HepG2 (cell line): ENCODE measurements at regions of chr17 and their contacts with region 1.

Region 1: DNA sequence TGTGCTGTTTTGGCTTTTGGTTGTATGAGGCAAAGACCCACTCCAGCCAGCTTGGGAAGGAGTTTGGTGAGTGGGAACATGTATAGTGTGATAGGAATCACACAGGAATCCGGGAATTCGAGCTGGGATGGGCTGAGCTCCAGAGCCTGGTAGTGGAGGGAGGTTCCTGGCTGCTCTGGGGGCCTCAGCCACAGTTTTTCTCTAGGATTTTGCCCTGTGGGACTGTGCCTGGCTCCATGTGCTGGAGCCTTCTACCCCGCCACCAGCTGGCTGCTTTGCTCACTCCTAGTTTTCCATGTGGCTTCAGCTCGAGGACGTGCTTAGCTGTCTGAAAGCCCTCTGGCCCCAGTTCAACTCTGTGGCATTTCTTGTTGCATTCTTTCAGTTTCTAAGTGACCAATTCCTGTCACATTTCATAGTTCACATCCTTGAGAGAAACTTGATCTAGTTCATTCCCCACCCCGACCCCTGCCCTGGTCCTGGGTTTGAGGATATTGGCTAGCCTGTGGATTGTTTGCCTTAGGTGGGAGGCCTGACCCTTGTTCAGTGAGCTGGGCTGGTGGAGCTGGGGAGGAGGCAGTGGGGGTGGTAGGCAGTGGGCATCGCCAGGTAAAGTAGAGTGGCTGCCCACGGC is 5.0 kb downstream of the SEC14L1 start:
- DNase-seq: peak; percentile 70
- ATAC-seq: peak; percentile 75
- H3K4me3 ChIP-seq: 0 out of 6 replicates have a peak overlapping the region, but pooled peaks of 1 of the 3 experiments have one; percentile 13
- H3K27ac ChIP-seq: peak overlapping the region; percentile 68
- H3K4me1 ChIP-seq: peaks cover 85% of the 10 kb centered on the region
- H3K27me3 ChIP-seq: no peaks in the 10 kb centered on the region; a peak in 1 of 5 replicates
- CTCF ChIP-seq: peak; percentile 54
- EP300 ChIP-seq: no peak; a peak in 1 of 4 replicates
- POLR2A ChIP-seq: no peak
- RAD21 ChIP-seq: 0 out of 2 replicates have a peak, but pooled peaks have one; percentile 46

Region 2: GRCh38 chr17:76893623-76894334 is 251.9 kb before region 1 on chr17:
- CTCF ChIA-PET with region 1: no interaction called
- POLR2A ChIA-PET with region 1: no interaction called
- in situ Hi-C with region 1: no loop called
- intact Hi-C with region 1: no loop called
- DNase-seq: no peak
- ATAC-seq: no peak
- H3K4me3 ChIP-seq: no peak overlapping the region
- H3K27ac ChIP-seq: no peak overlapping the region
- H3K4me1 ChIP-seq: no peaks in the 10 kb centered on the region
- H3K27me3 ChIP-seq: peaks cover 3 to 56% of the 10 kb centered on the region in 2 experiments; a peak in 4 of 5 replicates
- CTCF ChIP-seq: no peak
- EP300 ChIP-seq: no peak
- POLR2A ChIP-seq: no peak
- RAD21 ChIP-seq: no peak

Region 3: GRCh38 chr17:77096570-77097214 is 49.0 kb before region 1 on chr17:
- CTCF ChIA-PET with region 1: no interaction called
- POLR2A ChIA-PET with region 1: interaction called, 15 read pairs
- in situ Hi-C with region 1: no loop called
- intact Hi-C with region 1: loop called (anchors 2 kb)
- DNase-seq: peak; percentile 41
- ATAC-seq: 0 out of 3 replicates have a peak, but pooled peaks have one; percentile 25
- H3K4me3 ChIP-seq: no peak overlapping the region
- H3K27ac ChIP-seq: no peak overlapping the region
- H3K4me1 ChIP-seq: peaks cover 49% of the 10 kb centered on the region
- H3K27me3 ChIP-seq: no peaks in the 10 kb centered on the region
- CTCF ChIP-seq: peak; percentile 67
- EP300 ChIP-seq: no peak
- POLR2A ChIP-seq: no peak
- RAD21 ChIP-seq: peak; percentile 71; the same call in 1 of the 2 replicates

Region 4: DNA sequence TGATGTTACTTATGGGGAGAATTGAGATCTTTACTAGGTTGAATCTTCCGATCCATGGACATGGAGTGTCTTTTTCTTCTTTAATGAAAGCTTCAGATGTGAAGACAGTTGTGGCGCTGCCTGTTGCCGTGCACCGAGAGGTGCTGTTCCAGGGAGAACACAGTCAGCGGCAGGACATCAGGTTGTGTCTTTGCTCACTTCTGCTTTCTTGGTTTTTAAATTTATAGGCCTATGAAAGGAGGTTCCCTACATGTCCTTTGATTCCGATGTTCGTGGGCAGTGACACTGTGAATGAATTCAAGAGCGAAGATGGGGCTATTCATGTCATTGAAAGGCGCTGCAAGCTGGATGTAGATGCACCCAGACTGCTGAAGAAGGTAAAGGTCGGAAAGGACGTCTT is 44.8 kb after region 1 on chr17:
- CTCF ChIA-PET with region 1: no interaction called
- POLR2A ChIA-PET with region 1: no interaction called
- in situ Hi-C with region 1: no loop called
- intact Hi-C with region 1: no loop called
- DNase-seq: no peak
- ATAC-seq: no peak
- H3K4me3 ChIP-seq: no peak overlapping the region
- H3K27ac ChIP-seq: no peak overlapping the region
- H3K4me1 ChIP-seq: peaks cover 28% of the 10 kb centered on the region
- H3K27me3 ChIP-seq: no peaks in the 10 kb centered on the region
- CTCF ChIP-seq: no peak
- EP300 ChIP-seq: no peak
- POLR2A ChIP-seq: no peak
- RAD21 ChIP-seq: no peak

Region 5: GRCh38 chr17:77235370-77235941 is 89.7 kb after region 1 on chr17:
- CTCF ChIA-PET with region 1: no interaction called
- POLR2A ChIA-PET with region 1: no interaction called
- in situ Hi-C with region 1: no loop called
- intact Hi-C with region 1: no loop called
- DNase-seq: no peak
- ATAC-seq: no peak
- H3K4me3 ChIP-seq: no peak overlapping the region
- H3K27ac ChIP-seq: no peak overlapping the region
- H3K4me1 ChIP-seq: peaks cover 8% of the 10 kb centered on the region
- H3K27me3 ChIP-seq: peaks cover 4 to 10% of the 10 kb centered on the region in 2 experiments; a peak in 2 of 5 replicates
- CTCF ChIP-seq: no peak
- EP300 ChIP-seq: no peak
- POLR2A ChIP-seq: no peak
- RAD21 ChIP-seq: no peak

Region 6: GRCh38 chr17:77400445-77400870 is 254.7 kb after region 1 on chr17:
- CTCF ChIA-PET with region 1: no interaction called
- POLR2A ChIA-PET with region 1: no interaction called
- in situ Hi-C with region 1: no loop called
- intact Hi-C with region 1: no loop called
- DNase-seq: no peak
- ATAC-seq: peak; percentile 55
- H3K4me3 ChIP-seq: no peak overlapping the region
- H3K27ac ChIP-seq: peak overlapping the region; percentile 8
- H3K4me1 ChIP-seq: peaks cover 42% of the 10 kb centered on the region
- H3K27me3 ChIP-seq: no peaks in the 10 kb centered on the region
- CTCF ChIP-seq: peak; percentile 71
- EP300 ChIP-seq: no peak
- POLR2A ChIP-seq: no peak
- RAD21 ChIP-seq: peak; percentile 70